Gastrocnemius medialis (tissue), 4 donors: ENCODE measurements at regions of chr6 and their contacts with region 1.

Region 1: DNA sequence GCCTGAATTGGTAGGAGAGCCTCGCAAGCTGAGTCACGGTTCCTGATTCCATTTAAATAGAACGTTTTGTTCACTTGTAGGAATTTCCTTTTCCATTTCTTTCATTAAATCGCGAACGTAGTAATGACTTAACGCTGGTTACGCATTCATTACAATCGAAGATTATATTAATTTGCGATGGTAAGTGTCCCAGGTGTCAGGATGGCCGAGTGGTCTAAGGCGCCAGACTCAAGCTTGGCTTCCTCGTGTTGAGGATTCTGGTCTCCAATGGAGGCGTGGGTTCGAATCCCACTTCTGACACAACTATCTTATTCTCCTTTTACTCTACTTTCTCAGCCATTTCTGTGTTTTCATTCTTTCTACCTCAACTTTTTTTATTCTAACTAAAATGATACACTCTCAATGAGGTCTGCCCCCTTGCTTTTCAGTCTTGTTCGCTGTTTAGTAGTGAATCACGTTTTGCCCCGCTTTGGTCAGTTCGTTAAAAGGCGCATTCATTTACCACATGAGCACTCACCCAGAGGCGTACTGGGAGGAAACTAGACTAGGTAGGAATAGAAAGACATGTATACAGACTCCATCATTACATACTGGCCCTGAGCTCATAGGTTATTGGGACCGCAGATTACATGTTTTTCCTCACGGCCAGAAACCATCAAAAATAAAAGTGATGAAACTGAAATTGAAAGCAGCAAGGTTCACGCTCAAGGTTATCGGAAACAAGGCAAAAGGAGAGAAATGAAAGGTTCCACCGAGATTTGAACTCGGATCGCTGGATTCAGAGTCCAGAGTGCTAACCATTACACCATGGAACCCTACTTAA is 17.3 kb upstream of the TRIM27 start:
- DNase-seq: peak; percentile 38 to 51
- ATAC-seq: peak; percentile 69 to 76
- H3K4me3 ChIP-seq: peak overlapping the region; percentile 52 to 61 (median 58)
- H3K27ac ChIP-seq: peak overlapping the region; percentile 57 to 77 (median 72)
- H3K4me1 ChIP-seq: peaks cover 8 to 12% of the 10 kb centered on the region in 2 donors
- H3K27me3 ChIP-seq: peaks cover 3 to 31% (median 16%) of the 10 kb centered on the region in 3 donors
- CTCF ChIP-seq: no peak
- POLR2A ChIP-seq: no peak

Region 2: DNA sequence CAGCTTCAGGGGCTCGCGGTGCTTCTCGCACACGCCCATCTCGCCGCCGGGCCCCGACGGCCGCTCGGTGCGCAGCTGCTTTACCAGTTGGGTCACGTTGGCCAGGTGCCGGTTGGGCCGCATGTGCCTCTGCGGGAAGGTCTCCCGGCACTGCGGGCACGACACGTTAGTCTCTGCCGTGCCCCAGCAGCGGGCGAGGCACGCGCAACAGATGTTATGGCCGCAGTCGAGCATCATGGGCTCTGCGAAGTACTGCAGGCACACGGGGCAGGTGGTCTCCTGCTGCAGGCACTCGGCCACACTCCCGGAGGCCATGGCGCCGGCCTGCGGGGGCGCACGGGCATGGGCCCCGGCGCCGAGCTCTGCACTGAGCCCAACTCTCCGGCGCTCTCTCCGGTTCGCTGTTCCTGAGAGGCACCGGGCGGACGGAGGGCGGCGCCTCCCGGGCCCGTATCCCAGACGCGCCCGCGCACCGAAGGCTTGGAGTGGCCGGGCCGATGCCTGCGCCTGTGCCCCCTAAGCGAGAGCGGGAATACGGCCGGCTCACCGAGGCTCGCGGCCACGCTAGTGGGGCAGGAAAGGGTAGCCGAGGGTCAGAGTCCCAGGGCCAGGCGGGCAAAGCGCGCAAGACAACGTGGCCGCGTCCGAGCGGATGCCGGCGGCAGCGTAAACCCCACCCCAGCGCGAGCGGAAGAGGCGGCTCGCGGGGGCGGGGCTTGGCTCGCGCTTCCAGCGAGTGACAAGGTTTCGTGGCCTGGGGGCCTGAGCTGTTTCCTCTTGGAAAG is 17.6 kb before region 1 on chr6 and contains the start of gene TRIM27:
- in situ Hi-C with region 1: no loop called
- intact Hi-C with region 1: loop called (anchors 2 kb)
- DNase-seq: peak; percentile 80 to 81
- ATAC-seq: peak; percentile 91 to 93
- H3K4me3 ChIP-seq: peak within 1 kb of the TSS; percentile 79 to 91 (median 88)
- H3K27ac ChIP-seq: peak within 1 kb of the TSS; percentile 90 to 96 (median 95)
- H3K4me1 ChIP-seq: peaks cover 16% of the 10 kb centered on the region in 2 donors
- H3K27me3 ChIP-seq: no peaks in the 10 kb centered on the region
- CTCF ChIP-seq: peak in 1 of 5 experiments; percentile 24
- POLR2A ChIP-seq: peak; percentile 85 to 89
- total RNA-seq, gene TRIM27: 33.6 to 45.1 (median 36.1) TPM

Region 3: DNA sequence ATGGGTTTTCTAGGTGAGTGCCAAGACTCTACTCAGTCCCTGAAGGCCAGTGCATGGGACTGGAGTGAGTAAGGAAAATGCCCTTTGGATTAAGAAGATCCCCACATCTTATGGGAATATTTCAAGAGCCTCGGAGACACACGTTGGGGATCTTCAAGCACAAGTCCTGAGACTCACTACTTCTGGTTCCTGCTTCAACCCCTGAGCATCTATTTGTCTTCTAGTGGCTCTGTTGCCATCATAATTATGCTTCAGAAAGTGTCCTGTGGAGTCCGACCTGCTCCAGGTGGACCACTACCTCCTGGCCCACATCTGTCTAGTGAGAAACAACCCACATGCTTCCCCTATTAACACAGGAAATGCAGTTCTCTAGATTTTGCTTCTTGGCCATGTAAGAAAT is 427.7 kb after region 1 on chr6 and contains the start of gene OR5V1:
- in situ Hi-C with region 1: no loop called
- intact Hi-C with region 1: no loop called
- DNase-seq: no peak
- ATAC-seq: no peak
- H3K4me3 ChIP-seq: no peak within 1 kb of the TSS
- H3K27ac ChIP-seq: no peak within 1 kb of the TSS
- H3K4me1 ChIP-seq: no peaks in the 10 kb centered on the region
- H3K27me3 ChIP-seq: no peaks in the 10 kb centered on the region
- CTCF ChIP-seq: no peak
- POLR2A ChIP-seq: no peak
- total RNA-seq, gene OR5V1: not detected

Region 4: GRCh38 chr6:29976588-29977424 is 1035.7 kb after region 1 on chr6:
- in situ Hi-C with region 1: no loop called
- intact Hi-C with region 1: no loop called
- DNase-seq: peak; percentile 61 to 77
- ATAC-seq: peak; percentile 89 to 91
- H3K4me3 ChIP-seq: peak overlapping the region; percentile 58 to 80 (median 71)
- H3K27ac ChIP-seq: peak overlapping the region; percentile 88 to 97 (median 92)
- H3K4me1 ChIP-seq: peaks cover 7 to 19% of the 10 kb centered on the region in 2 donors
- H3K27me3 ChIP-seq: no peaks in the 10 kb centered on the region
- CTCF ChIP-seq: peak; percentile 4 to 37 (median 27)
- POLR2A ChIP-seq: peak; percentile 35 to 71